AG04449 (cell line): ENCODE measurements at regions of chr20 and their contacts with region 1.

Region 1: DNA sequence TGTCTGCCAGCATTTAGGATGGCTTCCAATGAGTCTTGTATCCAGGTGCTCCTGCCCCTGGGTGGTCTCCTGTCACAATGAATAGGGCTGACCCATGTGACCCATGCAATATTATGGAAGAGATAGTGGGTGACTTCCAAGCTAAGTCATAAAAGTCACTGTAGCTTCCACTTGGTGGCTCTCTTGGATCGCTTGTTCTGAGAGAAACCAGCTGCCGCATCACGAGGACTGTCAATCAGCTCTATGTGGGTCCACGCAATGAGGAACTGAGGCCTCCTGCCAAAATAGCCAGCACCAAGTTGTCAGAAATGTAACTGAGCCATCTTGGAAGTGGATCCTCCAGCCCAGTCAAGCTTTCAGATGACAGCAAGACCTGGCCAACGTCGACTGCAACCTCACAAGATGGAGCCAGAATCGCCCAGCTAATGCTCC is 14.9 kb upstream of the MATN4 start:
- DNase-seq: no peak
- H3K4me3 ChIP-seq: no peak overlapping the region
- CTCF ChIP-seq: no peak

Region 2: DNA sequence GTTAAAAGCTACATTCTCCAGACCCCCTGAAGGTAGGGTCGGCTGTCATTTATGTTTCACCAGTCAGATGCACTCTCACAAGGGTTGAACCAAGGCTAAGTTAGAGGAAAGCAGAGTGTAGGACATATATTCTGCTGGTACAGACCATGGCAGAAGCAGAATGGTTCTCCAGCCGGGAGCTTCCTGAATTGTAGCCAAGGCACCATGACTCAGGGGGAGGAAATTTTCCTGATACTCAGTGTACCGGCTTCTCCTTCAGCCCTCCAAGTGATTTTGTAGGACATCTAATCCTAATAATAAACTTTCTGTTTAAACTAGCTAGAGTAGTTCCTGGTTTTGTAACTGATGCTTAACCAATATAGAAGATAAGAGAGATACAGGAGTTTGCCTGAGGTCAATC is 54.4 kb before region 1 on chr20:
- CTCF ChIA-PET with region 1: no interaction called
- POLR2A ChIA-PET with region 1: no interaction called
- DNase-seq: no peak
- H3K4me3 ChIP-seq: no peak overlapping the region
- CTCF ChIP-seq: no peak

Region 3: GRCh38 chr20:45311589-45312211 is 11.3 kb before region 1 on chr20:
- CTCF ChIA-PET with region 1: interaction called, 14 read pairs
- POLR2A ChIA-PET with region 1: no interaction called
- DNase-seq: no peak
- H3K4me3 ChIP-seq: no peak overlapping the region
- CTCF ChIP-seq: peak; percentile 94

Region 4: DNA sequence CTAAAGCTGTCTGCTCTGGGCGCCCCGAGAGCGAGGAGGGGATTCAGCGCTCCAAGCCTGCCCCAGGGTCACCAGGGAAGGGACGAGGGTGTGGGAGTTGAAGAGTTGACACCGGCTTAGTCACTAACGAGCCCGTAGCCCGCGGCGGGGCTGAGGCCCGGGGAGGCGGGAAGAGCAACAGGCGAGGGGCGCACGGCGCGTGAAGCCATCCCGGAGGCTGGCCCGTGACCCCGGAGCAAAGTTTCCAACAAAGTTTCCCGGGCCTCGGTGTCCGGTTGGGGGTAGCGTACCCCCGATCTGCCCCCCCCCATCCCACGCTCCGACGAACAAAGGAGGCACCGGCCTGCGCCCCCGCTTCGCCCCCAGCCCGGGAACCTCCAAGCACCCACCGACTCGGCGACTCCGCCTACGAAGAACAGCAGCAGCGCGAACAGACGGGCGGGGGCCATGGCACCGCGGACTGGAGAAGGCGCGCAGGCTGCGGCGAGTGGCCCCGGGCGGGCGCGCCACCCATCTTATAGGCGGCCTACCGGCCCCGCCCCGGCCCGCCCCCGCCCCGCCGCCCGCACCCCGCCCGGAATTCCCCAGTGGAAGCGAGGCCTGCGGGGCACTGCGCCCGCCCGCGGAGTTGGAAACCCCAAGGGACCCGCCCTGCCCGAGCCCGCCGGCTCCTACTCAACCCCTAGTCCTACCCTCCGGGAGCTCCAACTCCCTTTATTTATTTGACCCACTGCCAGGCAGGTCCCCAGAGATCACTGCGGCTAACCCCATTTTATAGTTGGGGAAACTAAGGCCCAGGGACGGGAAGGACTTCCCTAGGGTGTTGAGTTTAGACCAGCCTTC is 25.2 kb after region 1 on chr20 and contains the start of gene SDC4:
- CTCF ChIA-PET with region 1: interaction called, 16 read pairs
- POLR2A ChIA-PET with region 1: interaction called, 3 read pairs
- DNase-seq: no peak
- H3K4me3 ChIP-seq: peak within 1 kb of the TSS; percentile 84
- CTCF ChIP-seq: no peak

Region 5: DNA sequence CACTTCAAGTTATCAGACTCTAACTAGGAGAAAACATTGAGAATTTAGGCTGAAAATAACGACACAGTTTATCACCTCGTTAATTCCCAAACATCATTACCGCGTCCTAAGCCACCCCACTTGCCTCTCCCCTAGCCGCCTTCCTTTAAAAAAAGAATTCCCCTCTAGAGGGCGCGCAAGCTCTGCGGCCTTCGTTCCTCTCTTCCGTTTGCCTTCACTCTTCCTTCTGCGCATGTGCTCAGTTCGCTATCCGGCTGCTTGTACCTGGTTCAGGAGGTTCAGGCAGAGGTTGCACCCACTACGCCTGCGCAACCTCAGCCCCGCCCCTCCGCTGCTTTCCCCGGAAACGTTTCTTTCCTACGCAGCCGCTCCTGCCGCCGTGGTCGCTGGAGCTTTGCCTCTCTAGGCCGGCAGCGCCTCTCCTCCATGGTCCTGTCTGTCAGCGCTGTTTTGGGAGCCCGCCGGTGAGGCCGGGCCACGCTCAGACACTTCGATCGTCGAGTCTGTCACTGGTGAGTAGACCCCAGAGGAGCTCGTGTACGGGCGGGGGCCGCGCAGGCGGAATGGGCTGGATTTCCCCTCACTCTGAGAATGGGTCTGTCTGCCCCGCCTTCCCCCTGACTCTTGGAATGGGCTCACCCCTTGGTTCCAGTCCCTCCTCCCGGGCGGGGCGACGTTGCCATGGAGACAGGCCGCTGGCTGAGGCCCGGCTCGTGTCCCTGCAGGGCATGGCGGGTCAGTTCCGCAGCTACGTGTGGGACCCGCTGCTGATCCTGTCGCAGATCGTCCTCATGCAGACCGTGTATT is 40.0 kb after region 1 on chr20 and contains the start of gene SYS1:
- CTCF ChIA-PET with region 1: interaction called, 137 read pairs
- POLR2A ChIA-PET with region 1: no interaction called
- DNase-seq: peak; percentile 90
- H3K4me3 ChIP-seq: peak within 1 kb of the TSS; percentile 96
- CTCF ChIP-seq: peak; percentile 87

Region 6: DNA sequence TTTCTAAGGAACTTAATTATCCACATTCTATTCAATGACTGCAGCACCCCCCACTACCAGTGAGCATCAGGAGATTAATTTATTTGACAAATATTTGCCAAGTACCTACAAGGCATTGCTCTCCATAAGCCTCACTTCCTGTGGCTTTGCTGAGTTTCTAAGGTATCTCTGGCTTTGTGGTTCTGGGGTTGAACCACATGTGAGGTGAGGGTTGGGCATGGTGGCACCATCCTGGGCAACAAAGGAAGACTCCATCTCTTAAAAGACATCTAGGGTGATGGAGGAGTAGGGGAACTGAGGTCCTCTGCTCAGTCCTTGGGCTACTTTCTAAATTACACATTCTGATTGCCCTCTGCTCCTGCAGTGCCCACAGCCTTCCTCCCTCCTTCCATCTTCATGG is 121.1 kb after region 1 on chr20:
- CTCF ChIA-PET with region 1: interaction called, 460 read pairs
- POLR2A ChIA-PET with region 1: no interaction called
- DNase-seq: no peak
- H3K4me3 ChIP-seq: no peak overlapping the region
- CTCF ChIP-seq: no peak

Region 7: DNA sequence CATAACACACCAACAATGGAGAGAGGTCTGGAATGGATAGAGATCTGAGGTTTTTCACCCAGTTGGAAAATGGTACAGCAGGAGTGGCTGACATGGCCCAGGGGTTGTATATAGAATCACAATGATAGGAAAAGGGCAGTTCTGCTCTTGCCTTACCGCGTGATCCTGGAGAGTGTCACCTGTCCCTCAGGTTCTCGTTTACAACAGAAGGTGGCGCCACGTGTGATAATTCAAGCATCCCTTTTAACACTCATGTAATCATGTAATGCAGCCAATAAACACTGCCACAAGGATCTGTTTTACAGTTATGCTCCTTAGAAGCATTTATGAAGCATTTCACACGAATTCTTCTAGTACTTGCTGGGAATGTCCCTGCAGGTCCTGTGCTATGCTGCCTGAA is 133.7 kb after region 1 on chr20:
- CTCF ChIA-PET with region 1: interaction called, 19 read pairs
- POLR2A ChIA-PET with region 1: no interaction called
- DNase-seq: no peak
- H3K4me3 ChIP-seq: no peak overlapping the region
- CTCF ChIP-seq: no peak